ENCODE measurements at regions of chr11 and their contacts with region 1.

Region 1: DNA sequence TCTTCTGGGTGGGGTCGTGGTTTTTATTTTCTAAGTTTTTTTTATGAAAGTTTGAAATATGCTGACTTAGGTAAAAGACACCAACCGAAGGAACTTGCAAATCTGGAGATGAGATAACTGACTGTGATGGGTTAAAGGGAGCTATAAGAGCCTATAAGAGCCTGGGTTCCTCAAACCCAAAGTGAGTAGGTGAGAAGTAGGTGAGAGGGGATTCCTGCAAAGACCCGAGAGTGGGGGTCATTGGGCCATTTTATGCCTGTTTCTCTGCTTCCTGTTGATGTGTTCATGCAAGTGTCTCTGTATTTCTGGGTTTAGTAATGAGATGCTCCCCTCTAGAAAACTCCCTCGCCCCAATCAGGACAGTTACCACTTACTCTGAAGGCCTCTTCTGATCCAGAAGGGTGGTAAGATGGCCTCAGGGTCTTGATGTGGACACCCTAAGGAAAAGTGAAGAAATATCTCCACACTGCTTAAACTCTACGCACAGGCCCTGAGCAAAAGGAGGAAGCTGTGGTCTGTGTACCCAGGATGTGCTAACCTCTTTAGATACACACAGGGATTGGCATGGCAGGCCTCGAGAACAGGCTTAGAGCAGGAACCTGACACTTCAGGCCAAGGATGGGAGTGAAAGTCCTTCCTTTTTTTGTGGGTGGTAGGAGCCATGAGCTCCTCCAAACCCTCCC is 1.8 kb downstream of the FLI1 start:
- DNase-seq: peak; percentile 67
- H3K4me3 Mint-ChIP-seq: peak overlapping the region; percentile 98
- H3K27ac Mint-ChIP-seq: peak overlapping the region; percentile 97
- H3K4me1 Mint-ChIP-seq: peaks cover 58% of the 10 kb centered on the region
- H3K27me3 Mint-ChIP-seq: peaks cover 10% of the 10 kb centered on the region

Region 2: GRCh38 chr11:128512474-128512996 is 183.1 kb before region 1 on chr11:
- CTCF ChIA-PET with region 1: interaction called, 3 read pairs
- POLR2A ChIA-PET with region 1: interaction called, 39 read pairs
- DNase-seq: peak; percentile 63
- H3K4me3 Mint-ChIP-seq: peak overlapping the region; percentile 97
- H3K27ac Mint-ChIP-seq: peak overlapping the region; percentile 88
- H3K4me1 Mint-ChIP-seq: peaks cover 97% of the 10 kb centered on the region
- H3K27me3 Mint-ChIP-seq: no peaks in the 10 kb centered on the region

Region 3: DNA sequence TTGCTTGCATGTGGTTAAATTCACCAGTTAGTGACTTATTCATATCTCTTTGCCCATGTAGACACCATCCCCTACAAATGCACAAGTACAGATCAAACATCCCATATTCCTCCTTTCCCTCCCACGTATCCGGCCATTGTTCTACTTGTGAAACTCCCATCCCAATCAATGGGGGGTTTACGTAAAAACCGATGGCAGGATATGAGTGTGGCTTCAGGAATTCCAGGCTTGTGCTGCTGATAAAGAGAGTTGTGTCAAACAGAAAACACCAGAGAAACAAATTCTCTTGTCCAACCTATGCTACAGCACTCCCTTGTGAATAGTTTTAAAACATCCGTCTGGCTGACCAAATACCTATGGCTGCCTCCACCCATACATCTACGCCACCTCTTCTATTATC is 13.7 kb after region 1 on chr11:
- CTCF ChIA-PET with region 1: interaction called, 8 read pairs
- POLR2A ChIA-PET with region 1: interaction called, 168 read pairs
- DNase-seq: no peak
- H3K4me3 Mint-ChIP-seq: no peak overlapping the region
- H3K27ac Mint-ChIP-seq: no peak overlapping the region
- H3K4me1 Mint-ChIP-seq: peaks cover 81% of the 10 kb centered on the region
- H3K27me3 Mint-ChIP-seq: no peaks in the 10 kb centered on the region

Region 4: GRCh38 chr11:128720522-128720985 is 24.9 kb after region 1 on chr11:
- CTCF ChIA-PET with region 1: interaction called, 3 read pairs
- POLR2A ChIA-PET with region 1: interaction called, 196 read pairs
- DNase-seq: peak; percentile 57
- H3K4me3 Mint-ChIP-seq: peak overlapping the region; percentile 66
- H3K27ac Mint-ChIP-seq: peak overlapping the region; percentile 83
- H3K4me1 Mint-ChIP-seq: peaks cover 99% of the 10 kb centered on the region
- H3K27me3 Mint-ChIP-seq: no peaks in the 10 kb centered on the region

Region 5: DNA sequence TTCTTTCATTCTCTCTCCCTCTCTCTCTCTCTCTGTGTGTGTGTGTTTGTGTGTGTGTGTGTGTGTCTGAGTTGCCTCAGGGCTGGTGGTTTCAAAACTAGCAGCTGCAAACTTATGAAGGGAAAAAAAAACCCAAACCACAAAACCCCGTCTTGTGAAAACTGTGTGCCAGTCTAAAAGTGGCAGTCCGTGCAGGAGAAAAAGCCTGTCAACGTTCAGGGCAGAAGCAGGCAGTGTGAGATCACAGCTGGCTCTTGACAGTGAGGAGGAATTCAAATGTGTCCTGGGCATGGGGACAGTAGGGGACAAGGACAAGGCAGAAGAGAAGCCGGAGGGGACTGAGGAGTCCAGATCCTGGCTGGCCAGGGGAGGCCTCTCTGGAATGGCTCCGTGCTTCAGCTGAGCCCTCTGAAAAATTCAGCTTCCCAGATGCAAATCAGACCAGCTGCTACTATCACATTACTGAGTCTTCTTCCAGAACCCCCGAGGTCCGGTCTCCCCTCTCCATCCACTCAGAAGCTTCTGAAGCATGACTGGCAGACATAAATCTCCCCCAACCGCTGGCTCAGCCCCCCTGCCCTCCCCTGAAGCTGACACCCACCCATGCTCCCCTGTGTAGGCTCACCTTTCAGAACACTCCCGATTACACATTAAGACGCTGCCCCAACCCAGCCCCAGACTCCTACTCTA is 30.1 kb after region 1 on chr11:
- CTCF ChIA-PET with region 1: interaction called, 6 read pairs
- POLR2A ChIA-PET with region 1: interaction called, 196 read pairs
- DNase-seq: peak; percentile 68
- H3K4me3 Mint-ChIP-seq: peak overlapping the region; percentile 67
- H3K27ac Mint-ChIP-seq: peak overlapping the region; percentile 95
- H3K4me1 Mint-ChIP-seq: peaks cover 98% of the 10 kb centered on the region
- H3K27me3 Mint-ChIP-seq: no peaks in the 10 kb centered on the region

Region 6: GRCh38 chr11:128733440-128734102 is 37.9 kb after region 1 on chr11:
- CTCF ChIA-PET with region 1: interaction called, 11 read pairs
- POLR2A ChIA-PET with region 1: interaction called, 196 read pairs
- DNase-seq: peak; percentile 62
- H3K4me3 Mint-ChIP-seq: peak overlapping the region; percentile 55
- H3K27ac Mint-ChIP-seq: peak overlapping the region; percentile 95
- H3K4me1 Mint-ChIP-seq: peaks cover 99% of the 10 kb centered on the region
- H3K27me3 Mint-ChIP-seq: no peaks in the 10 kb centered on the region

Region 7: DNA sequence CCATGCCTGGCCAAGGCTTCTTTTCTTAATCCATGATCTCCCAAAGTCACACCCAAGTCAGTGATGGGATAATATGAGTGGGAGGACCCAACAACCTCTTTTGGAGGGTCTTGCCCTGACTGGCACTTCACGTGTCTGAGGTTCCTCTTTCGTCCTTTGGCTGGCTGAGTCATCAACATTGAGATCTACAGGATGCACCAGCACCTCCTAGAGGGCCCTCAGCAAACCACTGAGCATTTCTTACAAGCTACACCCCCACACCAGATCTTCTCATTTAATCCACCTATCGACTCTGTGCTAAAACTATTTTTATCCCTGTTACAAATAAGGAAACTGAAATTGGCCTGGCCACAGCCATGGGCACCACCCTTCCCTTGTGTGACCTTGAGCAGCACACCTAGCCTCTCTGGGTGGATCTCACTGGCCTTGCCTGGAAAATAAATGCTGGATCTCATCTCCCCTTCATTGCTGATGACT is 61.6 kb after region 1 on chr11:
- CTCF ChIA-PET with region 1: interaction called, 6 read pairs
- POLR2A ChIA-PET with region 1: interaction called, 15 read pairs
- DNase-seq: peak; percentile 77
- H3K4me3 Mint-ChIP-seq: peak overlapping the region; percentile 24
- H3K27ac Mint-ChIP-seq: peak overlapping the region; percentile 87
- H3K4me1 Mint-ChIP-seq: peaks cover 75% of the 10 kb centered on the region
- H3K27me3 Mint-ChIP-seq: no peaks in the 10 kb centered on the region

Measured in activated CD4-positive, alpha-beta memory T cell treated with anti-CD3 and anti-CD28 coated beads, Interleukin-2, amount 10 ng/mL, durations not matched to agents 7 days and 5 days (primary cell).